ENCODE measurements at regions of chr7 and their contacts with region 1.

Region 1: DNA sequence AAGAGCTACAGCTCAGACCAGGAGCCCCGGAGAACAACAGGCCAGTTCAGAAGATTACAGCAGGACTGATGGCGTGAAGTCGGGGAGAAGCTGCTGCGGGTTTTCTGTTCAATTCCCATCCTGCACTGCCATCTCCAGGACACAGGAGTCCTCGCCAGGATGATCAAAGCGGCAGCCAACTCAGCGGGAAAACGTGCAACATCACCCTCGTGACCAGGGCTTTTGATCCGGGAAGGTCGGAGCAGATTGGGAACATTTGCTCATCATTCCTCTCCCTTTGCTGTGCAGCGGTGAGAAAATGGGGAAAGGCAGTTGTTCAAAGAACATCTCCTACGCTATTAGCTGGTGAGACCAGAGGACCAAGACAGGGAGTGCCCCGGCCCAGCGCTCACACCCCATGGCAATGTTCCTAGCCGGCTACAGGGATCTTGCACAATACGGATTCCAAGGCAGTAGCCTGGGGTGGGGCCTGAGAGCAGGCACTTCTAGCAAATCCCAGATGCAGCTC is 50.4 kb upstream of the FOXK1 start:
- DNase-seq: peak; percentile 82 to 90
- ATAC-seq: peak; percentile 94 to 98 (median 96)
- H3K4me3 ChIP-seq: peak overlapping the region; percentile 45
- H3K27ac ChIP-seq: peak overlapping the region; percentile 68
- H3K4me1 ChIP-seq: no peaks in the 10 kb centered on the region
- H3K27me3 ChIP-seq: no peaks in the 10 kb centered on the region
- CTCF ChIP-seq: peak; percentile 73

Region 2: DNA sequence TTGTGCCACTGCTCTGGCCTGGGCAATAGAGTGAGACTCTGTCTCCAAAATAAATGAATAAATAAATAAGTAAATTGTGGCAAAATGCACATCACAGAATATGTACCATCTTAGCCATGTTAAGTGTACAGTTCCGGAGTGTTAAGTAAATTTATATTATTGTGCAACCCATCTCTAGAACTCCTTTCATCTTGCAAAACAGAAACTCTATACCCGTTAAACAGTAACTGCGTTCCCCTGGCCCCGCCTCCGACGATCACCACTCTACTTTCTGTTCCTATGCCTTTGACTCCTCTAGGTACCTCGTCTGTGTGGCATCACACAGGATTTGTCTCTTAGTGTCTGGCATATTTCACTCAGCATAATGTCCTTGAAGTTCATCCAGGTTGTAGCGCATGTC is 306.0 kb before region 1 on chr7:
- intact Hi-C with region 1: no loop called
- DNase-seq: no peak
- ATAC-seq: no peak
- H3K4me3 ChIP-seq: no peak overlapping the region
- H3K27ac ChIP-seq: no peak overlapping the region
- H3K4me1 ChIP-seq: no peaks in the 10 kb centered on the region
- H3K27me3 ChIP-seq: no peaks in the 10 kb centered on the region
- CTCF ChIP-seq: no peak

Region 3: DNA sequence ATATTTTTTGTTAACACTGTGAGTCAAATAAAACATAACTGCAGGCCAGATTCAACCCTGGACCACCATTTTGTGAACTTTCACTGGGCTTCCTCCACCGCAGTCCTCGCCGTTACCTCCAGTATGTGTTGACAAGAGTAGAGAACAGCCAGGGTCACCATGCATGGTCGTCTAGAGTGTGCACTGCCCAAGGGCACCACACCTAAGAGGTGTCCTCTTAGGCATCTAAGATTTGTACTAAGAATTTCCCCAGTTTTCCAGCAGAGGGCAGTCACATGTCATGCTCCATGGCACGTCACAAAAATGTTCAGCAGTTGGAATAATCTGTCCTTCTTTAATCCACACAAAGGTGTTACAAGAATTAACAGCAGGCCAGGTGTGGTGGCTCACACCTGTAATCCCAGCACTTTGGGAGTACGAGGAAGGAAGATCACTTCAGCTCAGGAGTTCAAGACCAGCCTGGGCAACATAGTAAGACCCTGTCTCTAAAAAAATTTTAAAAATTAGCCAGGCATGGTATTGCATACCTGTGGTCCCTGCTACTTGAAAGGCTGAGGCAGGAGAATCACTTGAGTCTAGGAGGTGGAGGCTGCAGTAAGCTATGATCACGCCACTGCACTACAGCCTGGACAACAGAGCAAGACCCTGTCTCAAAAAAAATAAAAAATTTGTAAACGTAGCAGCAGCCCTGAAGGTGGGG is 20.8 kb before region 1 on chr7:
- intact Hi-C with region 1: loop called in 1 of 2 experiments (anchors 1 kb)
- DNase-seq: no peak
- ATAC-seq: peak; percentile 29 to 67 (median 52)
- H3K4me3 ChIP-seq: no peak overlapping the region
- H3K27ac ChIP-seq: no peak overlapping the region
- H3K4me1 ChIP-seq: peaks cover 15% of the 10 kb centered on the region
- H3K27me3 ChIP-seq: no peaks in the 10 kb centered on the region
- CTCF ChIP-seq: peak; percentile 86